Esophagus muscularis mucosa (tissue), 4 donors: ENCODE measurements at regions of chr1 and their contacts with region 1.

Region 1: GRCh38 chr1:110619412-110620249 is 13.5 kb upstream of the KCNA2 start:
- DNase-seq: no peak
- H3K4me3 ChIP-seq: peak overlapping the region in 1 of 4 donors; percentile 45
- H3K27ac ChIP-seq: no peak overlapping the region
- H3K4me1 ChIP-seq: peaks cover 7 to 11% (median 9%) of the 10 kb centered on the region in 4 donors
- H3K27me3 ChIP-seq: peaks cover 0 to 59% (median 8%) of the 10 kb centered on the region in 4 donors
- CTCF ChIP-seq: peak; percentile 73 to 86 (median 86)
- EP300 ChIP-seq: no peak
- POLR2A ChIP-seq: no peak

Region 2: GRCh38 chr1:110524311-110525251 is 95.0 kb before region 1 on chr1:
- intact Hi-C with region 1: loop called (anchors 10 kb)
- DNase-seq: no peak
- H3K4me3 ChIP-seq: peak overlapping the region in 1 of 4 donors; percentile 24
- H3K27ac ChIP-seq: no peak overlapping the region
- H3K4me1 ChIP-seq: peaks cover 0 to 10% (median 8%) of the 10 kb centered on the region in 4 donors
- H3K27me3 ChIP-seq: peaks cover 0 to 59% (median 3%) of the 10 kb centered on the region in 4 donors
- CTCF ChIP-seq: peak; percentile 38 to 55 (median 50)
- EP300 ChIP-seq: no peak
- POLR2A ChIP-seq: no peak

Region 3: DNA sequence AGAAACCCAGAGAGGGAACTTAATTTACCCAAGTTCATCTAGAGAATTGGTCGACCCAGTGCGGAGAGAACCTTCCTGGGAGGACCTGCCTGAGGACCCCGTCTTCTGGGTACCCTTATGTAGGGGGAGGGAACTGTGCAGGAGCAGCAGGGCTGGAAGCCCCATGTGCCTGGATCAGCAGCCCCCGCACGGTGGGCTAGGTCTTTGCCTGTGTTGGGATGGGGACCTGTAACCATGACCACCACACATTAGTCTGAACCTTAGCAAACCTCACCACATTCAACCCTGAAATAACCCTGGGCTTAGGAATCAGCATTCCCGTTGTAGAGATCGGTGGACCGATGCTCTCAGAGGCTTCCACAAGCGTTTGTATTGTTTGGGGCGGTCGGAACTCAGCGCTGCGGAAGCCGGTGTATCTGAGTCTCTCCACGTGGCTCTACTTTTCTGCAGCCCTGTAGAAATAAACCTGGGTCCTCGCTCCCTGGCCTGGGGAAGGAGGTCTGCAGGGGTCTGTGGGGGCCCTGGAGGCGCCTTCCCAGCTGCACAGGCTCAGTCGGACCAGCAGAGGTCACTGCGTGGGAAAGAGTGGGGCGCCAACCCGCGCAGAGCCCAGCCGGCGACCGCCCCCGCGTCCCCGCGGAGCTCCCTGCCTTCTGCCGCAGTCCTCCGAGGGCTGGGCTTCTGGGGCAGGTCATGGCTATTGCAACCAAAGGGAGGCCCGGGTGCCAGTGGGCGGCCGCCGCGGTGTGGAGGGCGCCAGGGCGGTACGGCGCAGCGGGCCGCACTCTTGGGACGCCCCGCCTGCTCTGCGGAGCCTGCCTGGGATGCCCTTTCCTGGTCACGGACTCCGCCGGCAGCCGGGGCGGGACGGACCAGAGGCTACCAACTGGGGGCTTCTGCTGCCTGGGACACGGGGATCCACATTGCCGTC is 64.5 kb before region 1 on chr1:
- intact Hi-C with region 1: loop called (anchors 2 kb)
- DNase-seq: no peak
- H3K4me3 ChIP-seq: peak overlapping the region; percentile 46 to 64 (median 52)
- H3K27ac ChIP-seq: peak overlapping the region; percentile 25 to 70 (median 52)
- H3K4me1 ChIP-seq: peaks cover 6 to 20% (median 16%) of the 10 kb centered on the region in 4 donors
- H3K27me3 ChIP-seq: peaks cover 0 to 44% (median 2%) of the 10 kb centered on the region in 4 donors
- CTCF ChIP-seq: peak; percentile 71 to 85 (median 77)
- EP300 ChIP-seq: no peak
- POLR2A ChIP-seq: no peak

Region 4: GRCh38 chr1:110780600-110781484 is 161.2 kb after region 1 on chr1:
- intact Hi-C with region 1: loop called (anchors 5 kb)
- DNase-seq: peak; percentile 94
- H3K4me3 ChIP-seq: no peak overlapping the region
- H3K27ac ChIP-seq: no peak overlapping the region
- H3K4me1 ChIP-seq: peaks cover 0 to 8% (median 4%) of the 10 kb centered on the region in 4 donors
- H3K27me3 ChIP-seq: peaks cover 0 to 31% (median 2%) of the 10 kb centered on the region in 4 donors
- CTCF ChIP-seq: peak; percentile 70 to 81 (median 73)
- EP300 ChIP-seq: no peak
- POLR2A ChIP-seq: no peak

Region 5: DNA sequence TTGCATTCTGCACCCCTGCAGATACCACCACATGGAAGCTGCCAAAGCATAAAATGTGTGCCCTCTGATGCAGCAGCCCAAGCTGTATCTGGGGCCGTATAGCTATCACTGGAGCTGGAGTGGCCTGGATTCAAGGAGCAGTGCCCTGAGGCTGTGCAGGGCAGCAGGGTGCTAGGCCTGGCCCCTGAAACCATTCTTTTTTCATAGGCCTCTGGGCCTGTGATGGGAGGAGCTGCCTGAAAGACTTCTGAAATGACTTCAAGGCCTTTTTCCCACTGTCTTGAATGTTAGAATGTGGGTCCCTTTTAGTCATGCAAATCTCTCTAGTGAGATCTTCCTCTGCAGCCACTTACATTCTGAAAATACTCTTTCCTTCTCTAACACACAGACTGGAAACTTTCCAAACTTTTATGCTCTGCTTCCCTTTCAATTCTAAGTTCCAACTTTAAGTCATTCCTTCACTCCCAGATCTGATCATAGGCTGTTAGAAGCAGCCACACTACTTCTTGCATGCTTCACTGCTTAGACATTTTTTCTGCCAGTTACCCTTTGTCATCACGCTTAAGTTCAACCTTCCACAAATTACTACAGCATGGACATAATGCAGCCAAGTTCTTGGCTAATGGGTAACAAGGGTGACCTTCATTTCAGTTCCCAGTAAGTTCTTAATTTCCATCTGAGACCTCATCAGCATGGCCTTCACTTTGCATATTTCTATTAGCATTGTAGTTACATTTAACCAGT is 477.9 kb after region 1 on chr1:
- intact Hi-C with region 1: no loop called
- DNase-seq: no peak
- H3K4me3 ChIP-seq: no peak overlapping the region
- H3K27ac ChIP-seq: no peak overlapping the region
- H3K4me1 ChIP-seq: no peaks in the 10 kb centered on the region
- H3K27me3 ChIP-seq: no peaks in the 10 kb centered on the region
- CTCF ChIP-seq: no peak
- EP300 ChIP-seq: no peak
- POLR2A ChIP-seq: no peak